A673 (cell line): ENCODE measurements at regions of chr12 and their contacts with region 1.

Region 1: GRCh38 chr12:111033281-111034082 is 113.1 kb upstream of the MYL2 start:
- DNase-seq: peak; percentile 76
- H3K4me3 ChIP-seq: peak overlapping the region; percentile 76
- H3K27ac ChIP-seq: no peak overlapping the region
- H3K4me1 ChIP-seq: peaks cover 21% of the 10 kb centered on the region
- H3K27me3 ChIP-seq: peaks cover 43% of the 10 kb centered on the region
- CTCF ChIP-seq: peak; percentile 77

Region 2: DNA sequence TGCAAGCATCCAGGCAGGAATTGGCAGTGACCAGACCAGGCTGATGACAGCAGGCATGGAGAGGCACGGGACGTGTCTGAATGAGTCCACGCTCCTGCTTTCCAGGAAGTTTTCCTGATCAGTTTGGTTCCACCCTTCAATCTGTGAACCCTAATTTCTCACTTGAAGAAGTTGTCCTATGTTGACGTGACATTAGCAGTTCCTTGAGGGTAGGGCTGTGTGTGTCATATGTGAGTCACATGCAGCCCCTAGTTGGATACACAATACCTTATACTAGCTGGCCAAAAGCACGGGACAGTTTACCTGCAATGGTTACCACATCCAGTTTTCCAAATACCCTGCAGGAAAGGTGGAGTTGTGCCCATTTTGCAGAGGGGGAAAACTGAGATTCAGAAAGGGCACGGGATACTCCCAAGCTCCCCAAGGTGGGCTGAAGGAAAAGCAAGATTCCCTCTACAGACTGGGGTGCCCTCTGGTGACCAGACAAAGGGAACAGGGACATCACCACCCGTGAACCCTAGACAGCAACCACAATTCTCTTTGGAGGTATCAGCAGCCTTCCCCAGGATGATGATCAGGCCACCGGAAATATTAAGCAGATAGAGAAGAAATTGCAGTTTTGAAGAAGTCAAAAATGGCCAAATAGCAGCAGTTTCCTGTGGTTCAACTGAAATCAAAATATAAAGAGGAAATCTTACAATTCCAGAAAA is 140.9 kb after region 1 on chr12:
- CTCF ChIA-PET with region 1: no interaction called
- POLR2A ChIA-PET with region 1: no interaction called
- intact Hi-C with region 1: loop called (anchors 10 kb)
- DNase-seq: peak; percentile 43
- H3K4me3 ChIP-seq: no peak overlapping the region
- H3K27ac ChIP-seq: no peak overlapping the region
- H3K4me1 ChIP-seq: no peaks in the 10 kb centered on the region
- H3K27me3 ChIP-seq: no peaks in the 10 kb centered on the region
- CTCF ChIP-seq: peak; percentile 45

Region 3: GRCh38 chr12:111274777-111275176 is 241.3 kb after region 1 on chr12:
- CTCF ChIA-PET with region 1: interaction called, 7 read pairs
- POLR2A ChIA-PET with region 1: no interaction called
- intact Hi-C with region 1: loop called (anchors 5 kb)
- DNase-seq: peak; percentile 45
- H3K4me3 ChIP-seq: no peak overlapping the region
- H3K27ac ChIP-seq: no peak overlapping the region
- H3K4me1 ChIP-seq: peaks cover 6% of the 10 kb centered on the region
- H3K27me3 ChIP-seq: no peaks in the 10 kb centered on the region
- CTCF ChIP-seq: peak; percentile 66